ENCODE measurements at regions of chr10 and their contacts with region 1.

Region 1: GRCh38 chr10:22630234-22631174 is 83.9 kb downstream of the PIP4K2A start:
- DNase-seq: peak in 3 of 10 donors; percentile 42 to 56 (median 52)
- ATAC-seq: peak; percentile 83 to 90
- H3K4me3 Mint-ChIP-seq: peak overlapping the region; percentile 62 to 89 (median 84)
- H3K27ac Mint-ChIP-seq: peak overlapping the region; percentile 75 to 98 (median 94)
- H3K4me1 Mint-ChIP-seq: peaks cover 44 to 98% (median 93%) of the 10 kb centered on the region in 4 donors
- H3K27me3 Mint-ChIP-seq: no peaks in the 10 kb centered on the region

Region 2: GRCh38 chr10:22593636-22594198 is 36.8 kb before region 1 on chr10:
- POLR2A ChIA-PET with region 1: no interaction called
- DNase-seq: no peak
- ATAC-seq: no peak
- H3K4me3 Mint-ChIP-seq: no peak overlapping the region
- H3K27ac Mint-ChIP-seq: peak overlapping the region in 6 of 10 donors; percentile 12 to 90 (median 84)
- H3K4me1 Mint-ChIP-seq: peaks cover 33 to 84% (median 79%) of the 10 kb centered on the region in 4 donors
- H3K27me3 Mint-ChIP-seq: no peaks in the 10 kb centered on the region

Region 3: DNA sequence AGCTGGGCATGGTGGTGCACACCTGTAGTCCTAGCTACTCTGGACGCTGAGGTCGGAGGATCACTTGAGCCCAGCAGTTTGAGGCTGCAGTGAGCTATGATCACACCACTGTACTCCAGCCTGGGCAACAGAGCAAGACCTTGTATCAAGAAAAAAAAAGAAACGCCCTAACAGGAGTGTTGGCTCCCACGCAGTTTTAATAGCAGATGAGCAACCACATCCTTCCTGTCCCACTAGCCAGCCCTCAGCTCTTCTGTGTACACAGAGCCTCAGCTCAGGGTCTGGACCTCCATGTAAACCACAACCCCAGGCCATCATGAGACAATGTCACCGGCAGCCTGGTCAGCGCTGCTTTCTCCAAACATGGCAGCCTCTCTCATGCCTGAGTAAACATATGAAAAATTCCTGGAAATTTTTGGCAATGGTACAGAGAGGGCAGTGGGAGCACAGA is 24.3 kb before region 1 on chr10:
- POLR2A ChIA-PET with region 1: interaction called, 38 read pairs
- DNase-seq: peak in 5 of 10 donors; percentile 20 to 39 (median 31)
- ATAC-seq: peak; percentile 52 to 64
- H3K4me3 Mint-ChIP-seq: peak overlapping the region; percentile 44 to 76 (median 66)
- H3K27ac Mint-ChIP-seq: peak overlapping the region; percentile 92 to 96 (median 94)
- H3K4me1 Mint-ChIP-seq: peaks cover 44 to 98% (median 93%) of the 10 kb centered on the region in 4 donors
- H3K27me3 Mint-ChIP-seq: no peaks in the 10 kb centered on the region

Region 4: GRCh38 chr10:22615819-22616499 is 14.5 kb before region 1 on chr10:
- POLR2A ChIA-PET with region 1: interaction called, 38 read pairs
- DNase-seq: no peak
- ATAC-seq: no peak
- H3K4me3 Mint-ChIP-seq: peak overlapping the region; percentile 16 to 73 (median 62)
- H3K27ac Mint-ChIP-seq: peak overlapping the region; percentile 73 to 97 (median 83)
- H3K4me1 Mint-ChIP-seq: peaks cover 56 to 98% (median 94%) of the 10 kb centered on the region in 4 donors
- H3K27me3 Mint-ChIP-seq: no peaks in the 10 kb centered on the region

Region 5: GRCh38 chr10:22648547-22648961 is 18.1 kb after region 1 on chr10:
- POLR2A ChIA-PET with region 1: interaction called, 30 read pairs
- DNase-seq: no peak
- ATAC-seq: no peak
- H3K4me3 Mint-ChIP-seq: peak overlapping the region; percentile 40 to 87 (median 74)
- H3K27ac Mint-ChIP-seq: peak overlapping the region; percentile 80 to 98 (median 96)
- H3K4me1 Mint-ChIP-seq: peaks cover 62 to 96% (median 94%) of the 10 kb centered on the region in 4 donors
- H3K27me3 Mint-ChIP-seq: no peaks in the 10 kb centered on the region